Dendritic cell treated with granulocyte-macrophage colony-stimulating factor and Interleukin-4, amounts not matched to agents 40 ng/mL and 50 ng/mL, for 4 days (primary cell): ENCODE measurements at regions of chr12 and their contacts with region 1.

Region 1: DNA sequence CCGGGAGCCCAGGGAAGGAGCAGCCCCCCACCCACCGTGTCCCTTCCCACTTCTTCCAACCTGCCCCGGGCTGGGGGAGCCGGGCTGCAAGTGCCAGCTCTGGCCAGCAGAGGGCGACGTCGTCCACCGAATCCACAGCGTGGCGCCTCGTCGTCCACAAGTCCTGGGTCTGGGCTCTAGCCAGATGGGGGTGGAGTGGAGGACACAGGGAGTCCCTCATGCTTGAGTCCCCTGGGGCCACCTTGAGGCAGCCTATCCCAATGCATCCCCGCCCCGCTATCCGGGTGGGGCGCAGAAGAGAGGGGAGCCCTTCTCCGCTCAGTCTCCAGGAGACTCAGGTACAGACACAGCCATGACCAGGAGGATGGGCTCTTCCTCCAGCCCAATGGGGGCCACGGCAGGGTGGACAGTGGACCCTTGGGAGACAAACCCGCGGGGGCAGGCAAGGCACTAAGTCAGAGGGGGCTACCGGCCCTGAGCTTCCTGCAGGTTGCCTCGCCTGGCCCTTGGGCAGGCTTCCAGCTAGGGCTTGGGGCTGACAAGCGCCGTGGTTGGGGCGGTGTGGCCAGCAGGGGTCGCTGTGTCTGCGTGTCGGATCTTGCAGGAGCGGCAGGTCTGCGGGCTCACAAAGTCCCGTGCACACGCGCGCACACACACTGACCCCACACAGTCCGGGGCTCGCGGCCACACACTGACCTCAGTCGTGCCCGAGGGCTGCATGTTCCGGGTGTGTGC is 5.5 kb downstream of the AQP5 start:
- H3K4me3 Mint-ChIP-seq: peak overlapping the region; percentile 58
- H3K27ac Mint-ChIP-seq: no peak overlapping the region
- H3K4me1 Mint-ChIP-seq: peaks cover 5% of the 10 kb centered on the region
- H3K27me3 Mint-ChIP-seq: peaks cover 56% of the 10 kb centered on the region

Region 2: DNA sequence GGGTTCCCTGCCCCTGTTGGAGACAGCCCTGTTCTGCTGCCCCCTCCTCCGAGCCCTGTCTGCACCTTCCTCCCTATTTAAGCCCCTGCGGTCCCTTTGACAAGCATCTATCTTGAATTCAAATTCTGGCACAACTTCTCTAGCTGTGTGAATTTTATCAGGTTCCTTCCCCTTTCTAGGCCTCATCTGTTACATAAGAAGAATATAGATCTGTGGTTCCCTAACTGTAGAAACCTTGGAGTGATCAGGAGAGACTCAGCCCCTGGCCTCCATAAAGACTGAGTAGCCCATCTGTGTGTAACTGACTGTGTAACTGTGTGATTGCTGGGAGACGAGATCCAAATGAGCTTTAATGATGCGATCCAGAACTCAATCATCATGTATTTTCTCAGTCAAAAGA is 71.1 kb after region 1 on chr12:
- intact Hi-C with region 1: loop called (anchors 5 kb)
- H3K4me3 Mint-ChIP-seq: no peak overlapping the region
- H3K27ac Mint-ChIP-seq: no peak overlapping the region
- H3K4me1 Mint-ChIP-seq: peaks cover 57% of the 10 kb centered on the region
- H3K27me3 Mint-ChIP-seq: peaks cover 6% of the 10 kb centered on the region

Region 3: DNA sequence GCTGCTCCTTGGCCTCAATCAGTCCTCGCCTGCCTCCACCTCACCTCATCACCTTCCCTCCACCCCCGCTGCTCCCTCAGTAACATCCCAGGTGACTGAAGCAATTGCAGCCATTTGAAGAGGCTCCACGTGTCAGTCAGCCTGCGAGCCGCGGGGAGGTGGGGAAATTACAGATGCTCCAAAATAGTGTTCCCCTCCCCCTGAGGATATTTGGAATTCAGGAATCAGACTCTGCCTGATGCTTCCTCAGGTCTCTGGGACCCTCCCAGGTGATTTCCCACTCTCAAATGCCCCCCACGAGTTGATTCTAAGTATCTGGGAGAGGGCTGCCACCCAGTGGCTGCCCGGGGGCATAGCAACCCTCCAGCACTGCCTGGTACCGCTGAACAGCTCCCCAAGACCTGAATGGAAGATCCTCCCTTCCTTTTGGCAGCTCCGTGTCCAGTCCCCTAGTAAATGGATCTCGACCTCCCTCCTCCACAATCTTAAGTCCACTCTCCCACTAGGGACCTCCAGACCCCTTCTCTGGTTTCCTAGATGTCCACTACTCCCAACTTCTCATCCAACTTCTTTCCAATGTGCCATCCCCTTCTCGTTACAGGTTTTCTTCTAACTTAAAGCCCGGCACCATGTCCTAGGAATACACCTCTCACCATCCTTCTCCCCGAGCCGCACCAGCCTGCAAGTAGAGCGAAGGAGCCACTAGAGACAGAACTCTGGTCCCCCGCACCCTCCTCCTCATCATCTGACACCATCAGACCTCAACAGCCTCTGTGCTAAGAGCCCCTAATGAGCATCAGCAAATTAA is 88.8 kb after region 1 on chr12:
- intact Hi-C with region 1: loop called (anchors 1 kb)
- H3K4me3 Mint-ChIP-seq: no peak overlapping the region
- H3K27ac Mint-ChIP-seq: no peak overlapping the region
- H3K4me1 Mint-ChIP-seq: peaks cover 61% of the 10 kb centered on the region
- H3K27me3 Mint-ChIP-seq: peaks cover 62% of the 10 kb centered on the region

Region 4: DNA sequence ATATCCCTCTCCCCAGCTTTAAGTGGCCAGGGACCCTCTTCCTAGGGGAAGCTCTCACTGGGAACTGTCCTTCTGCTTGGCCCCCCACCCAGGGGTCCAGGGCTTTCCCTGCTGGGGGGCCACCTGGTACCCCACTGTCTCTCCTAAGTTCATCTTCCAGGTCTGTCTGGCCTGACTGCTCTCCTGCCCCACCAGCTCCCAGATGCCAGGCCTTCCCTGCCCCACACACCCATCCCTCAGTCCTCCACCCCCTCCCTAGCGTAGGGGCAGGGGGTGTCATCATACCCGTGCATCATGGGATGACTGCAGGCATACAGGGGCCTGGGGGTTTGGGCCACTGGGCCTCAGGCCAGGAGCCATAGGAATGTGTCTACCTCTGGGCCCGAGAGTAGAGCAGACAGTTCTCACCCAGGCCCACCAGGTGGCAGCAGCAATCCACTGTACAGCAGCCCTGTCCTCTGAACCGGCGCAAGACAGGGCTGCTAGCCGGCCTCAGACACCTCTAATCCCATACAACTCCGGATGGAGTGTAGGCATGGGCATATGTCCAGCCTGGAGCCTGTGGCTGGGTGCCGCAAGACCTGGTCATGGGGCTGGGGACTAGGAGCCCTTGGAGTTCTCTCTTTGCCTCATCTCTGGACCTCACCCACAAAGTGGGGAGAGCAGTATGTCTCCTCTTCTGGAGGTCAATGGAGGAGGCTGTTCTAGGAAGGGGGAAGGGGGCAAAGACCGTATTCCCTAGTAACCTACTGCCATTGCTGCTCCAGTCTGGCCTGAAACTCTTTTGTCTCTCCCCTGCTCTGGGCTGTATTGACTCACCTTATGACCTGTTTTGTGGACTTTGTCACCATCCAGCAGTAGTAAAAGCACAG is 108.0 kb after region 1 on chr12:
- intact Hi-C with region 1: loop called (anchors 1 kb)
- H3K4me3 Mint-ChIP-seq: no peak overlapping the region
- H3K27ac Mint-ChIP-seq: no peak overlapping the region
- H3K4me1 Mint-ChIP-seq: peaks cover 9% of the 10 kb centered on the region
- H3K27me3 Mint-ChIP-seq: peaks cover 39% of the 10 kb centered on the region

Region 5: GRCh38 chr12:50174971-50175715 is 207.9 kb after region 1 on chr12:
- intact Hi-C with region 1: loop called (anchors 2 kb)
- H3K4me3 Mint-ChIP-seq: no peak overlapping the region
- H3K27ac Mint-ChIP-seq: no peak overlapping the region
- H3K4me1 Mint-ChIP-seq: peaks cover 6% of the 10 kb centered on the region
- H3K27me3 Mint-ChIP-seq: no peaks in the 10 kb centered on the region